Thyroid gland (tissue), 4 donors: ENCODE measurements at regions of chr6 and their contacts with region 1.

Region 1: DNA sequence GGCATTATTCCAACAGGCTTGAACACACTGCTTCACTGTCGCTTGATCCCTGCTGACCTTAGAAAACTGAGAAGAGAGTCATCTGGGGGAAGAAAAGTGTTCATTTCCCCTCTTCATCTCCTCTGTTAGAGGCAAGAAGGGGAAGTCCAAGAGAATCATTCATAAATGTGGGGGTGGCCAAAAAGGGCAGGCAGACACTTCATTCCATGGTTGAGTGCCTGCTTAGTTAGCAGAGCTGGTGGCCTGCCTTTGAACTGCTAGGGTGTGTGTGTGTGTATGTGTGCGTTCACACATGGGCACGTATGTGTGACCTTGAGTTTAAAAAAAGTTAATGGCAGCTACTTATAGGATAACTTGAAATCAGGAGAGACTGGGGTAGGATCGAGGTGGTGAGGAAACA is 39.4 kb upstream of the RFPL4B start:
- DNase-seq: peak; percentile 39 to 42
- H3K4me3 ChIP-seq: no peak overlapping the region
- H3K27ac ChIP-seq: no peak overlapping the region
- H3K4me1 ChIP-seq: peaks cover 0 to 9% of the 10 kb centered on the region in 2 donors
- H3K27me3 ChIP-seq: no peaks in the 10 kb centered on the region
- CTCF ChIP-seq: no peak
- POLR2A ChIP-seq: no peak

Region 2: DNA sequence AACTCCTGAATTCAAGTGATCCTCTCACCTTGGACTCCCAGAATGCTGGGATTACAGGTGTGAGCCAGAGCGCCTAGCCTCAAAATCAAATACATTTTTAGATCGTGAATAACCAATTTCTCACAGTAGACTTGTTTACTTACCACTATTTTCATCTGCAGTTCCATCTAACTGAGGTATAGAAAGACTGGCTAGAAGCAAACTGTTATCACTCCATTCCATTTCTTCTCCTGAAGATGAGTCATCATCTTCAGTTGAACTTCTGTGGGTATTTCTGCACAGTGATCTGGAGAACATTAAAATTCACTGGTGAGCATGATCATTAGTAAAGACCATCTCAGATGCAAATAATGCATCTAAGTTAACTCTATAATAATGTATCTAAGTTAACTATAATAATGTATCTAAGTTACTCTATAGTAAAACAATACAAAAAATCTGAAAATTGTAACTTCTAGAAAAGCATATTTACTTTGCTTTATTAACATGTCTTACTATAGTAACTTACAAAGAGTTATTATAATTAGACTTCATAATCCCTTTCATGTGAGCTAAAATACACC is 930.1 kb before region 1 on chr6:
- intact Hi-C with region 1: no loop called
- DNase-seq: no peak
- H3K4me3 ChIP-seq: no peak overlapping the region
- H3K27ac ChIP-seq: no peak overlapping the region
- H3K4me1 ChIP-seq: peaks cover 0 to 5% of the 10 kb centered on the region in 2 donors
- H3K27me3 ChIP-seq: no peaks in the 10 kb centered on the region
- CTCF ChIP-seq: no peak
- POLR2A ChIP-seq: no peak

Region 3: DNA sequence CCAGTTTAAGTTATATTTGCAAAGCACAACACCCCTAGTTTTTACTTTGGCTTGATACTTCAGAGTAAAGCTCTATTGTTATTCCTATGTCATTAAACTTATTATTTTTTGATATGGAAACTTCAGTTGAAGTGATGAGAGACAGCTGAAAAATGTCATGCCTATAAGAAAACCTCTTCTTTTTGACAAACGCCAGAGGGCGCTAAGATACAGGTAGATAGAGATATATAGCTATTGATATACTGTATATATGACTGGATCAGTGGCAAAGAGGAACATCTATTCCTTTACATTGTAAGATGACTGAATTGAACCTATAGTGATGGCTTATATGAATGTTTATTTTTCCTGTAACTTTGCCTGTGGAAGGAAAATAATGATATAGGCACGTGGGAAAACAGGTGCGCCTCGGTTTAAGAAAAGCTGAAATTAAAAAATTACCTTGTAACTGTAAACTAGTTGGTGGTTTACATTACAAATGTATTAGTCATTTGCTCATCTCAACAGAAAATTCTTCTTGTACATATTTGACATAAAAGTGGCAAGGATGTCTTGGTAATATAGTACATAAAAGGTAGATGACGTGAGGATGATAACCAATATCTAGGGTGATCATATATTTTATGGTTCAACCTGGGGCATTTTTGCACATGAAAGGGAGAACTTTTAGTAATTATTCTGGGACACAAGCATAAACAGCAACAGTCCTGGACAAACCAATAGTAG is 127.4 kb before region 1 on chr6:
- intact Hi-C with region 1: loop called (anchors 5 kb)
- DNase-seq: peak in 1 of 2 donors; percentile 38
- H3K4me3 ChIP-seq: no peak overlapping the region
- H3K27ac ChIP-seq: no peak overlapping the region
- H3K4me1 ChIP-seq: peaks cover 0 to 3% of the 10 kb centered on the region in 2 donors
- H3K27me3 ChIP-seq: no peaks in the 10 kb centered on the region
- CTCF ChIP-seq: peak; percentile 37 to 79 (median 71)
- POLR2A ChIP-seq: no peak